Caco-2 (cell line): ENCODE measurements at regions of chr20 and their contacts with region 1.

Region 1: DNA sequence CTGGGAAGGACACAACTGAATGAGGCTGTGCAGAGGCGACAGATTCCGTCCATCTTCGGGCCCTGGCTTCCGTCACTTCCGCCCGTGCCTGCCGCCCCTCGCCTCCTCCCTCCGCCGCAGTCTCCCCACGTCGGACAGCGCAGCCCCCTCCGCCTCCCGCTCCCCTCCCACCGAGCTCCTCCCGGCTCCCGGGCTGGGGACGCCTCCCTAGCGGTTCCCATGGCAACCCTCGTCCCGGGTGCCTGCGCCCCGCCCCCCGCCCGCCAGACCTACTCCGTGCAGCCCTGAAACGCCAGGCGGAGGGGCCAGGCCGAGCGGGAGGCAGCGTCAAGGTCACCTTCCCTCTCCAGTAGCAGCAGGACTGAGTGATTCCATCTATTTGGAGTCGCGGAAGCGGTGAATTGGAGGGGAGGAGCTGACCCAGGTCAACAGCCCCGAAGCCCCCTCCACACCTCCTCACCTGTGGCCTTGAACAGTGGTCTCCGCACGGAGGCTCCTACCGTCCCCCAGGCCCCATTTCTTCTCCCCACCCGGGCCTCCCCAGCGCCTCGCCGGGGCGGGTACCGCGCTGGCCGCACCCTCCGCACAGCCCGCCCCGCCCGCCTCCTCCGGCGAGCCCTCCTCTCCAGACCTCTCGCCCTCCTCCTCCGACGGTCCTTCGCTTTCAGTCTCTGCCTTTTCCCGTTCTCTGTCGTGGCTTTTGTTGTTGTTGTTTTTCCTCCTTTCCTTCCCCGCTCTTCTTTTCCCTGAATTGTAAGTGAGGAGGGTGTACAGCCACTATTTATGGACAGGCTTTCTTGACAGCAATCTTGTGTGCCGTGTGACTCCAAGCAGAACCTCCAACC is 951 bp downstream of the NRSN2 start:
- DNase-seq: peak; percentile 98 to 99
- H3K4me3 ChIP-seq: peak overlapping the region; percentile 96
- H3K4me3 Mint-ChIP-seq: peak overlapping the region; percentile 98
- H3K27ac Mint-ChIP-seq: peak overlapping the region; percentile 97
- H3K4me1 ChIP-seq: peaks cover 16% of the 10 kb centered on the region
- H3K4me1 Mint-ChIP-seq: peaks cover 19% of the 10 kb centered on the region
- H3K27me3 ChIP-seq: no peaks in the 10 kb centered on the region
- H3K27me3 Mint-ChIP-seq: no peaks in the 10 kb centered on the region
- CTCF ChIP-seq: no peak

Region 2: DNA sequence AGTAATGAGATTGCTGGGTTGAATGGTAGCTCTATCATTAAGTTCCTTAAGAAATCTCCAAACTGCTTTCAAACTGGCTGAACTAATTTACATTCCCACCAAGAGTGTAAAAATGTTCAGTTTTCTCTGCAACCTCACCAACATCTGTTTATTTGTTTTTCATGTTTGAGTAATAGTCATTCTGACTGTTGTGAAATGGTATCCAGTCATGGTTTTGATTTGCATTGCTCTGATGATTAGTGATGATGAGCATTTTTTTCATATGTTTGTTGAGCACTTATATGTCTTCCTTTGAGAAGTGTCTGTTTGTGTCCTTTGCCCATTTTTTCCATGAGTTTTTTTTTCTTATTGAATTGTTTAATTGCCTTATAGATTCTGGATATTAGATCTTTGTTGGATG is 235.5 kb before region 1 on chr20:
- CTCF ChIA-PET with region 1: no interaction called
- POLR2A ChIA-PET with region 1: no interaction called
- intact Hi-C with region 1: no loop called
- DNase-seq: no peak
- H3K4me3 ChIP-seq: no peak overlapping the region
- H3K4me3 Mint-ChIP-seq: no peak overlapping the region
- H3K27ac Mint-ChIP-seq: no peak overlapping the region
- H3K4me1 ChIP-seq: no peaks in the 10 kb centered on the region
- H3K4me1 Mint-ChIP-seq: no peaks in the 10 kb centered on the region
- H3K27me3 ChIP-seq: no peaks in the 10 kb centered on the region
- H3K27me3 Mint-ChIP-seq: peaks cover 4% of the 10 kb centered on the region
- CTCF ChIP-seq: no peak

Region 3: GRCh38 chr20:324177-325044 is 23.5 kb before region 1 on chr20:
- CTCF ChIA-PET with region 1: no interaction called
- POLR2A ChIA-PET with region 1: interaction called, 14 read pairs
- intact Hi-C with region 1: loop called (anchors 1 kb)
- DNase-seq: peak; percentile 90 to 95
- H3K4me3 ChIP-seq: peak overlapping the region; percentile 59
- H3K4me3 Mint-ChIP-seq: peak overlapping the region; percentile 94
- H3K27ac Mint-ChIP-seq: peak overlapping the region; percentile 87
- H3K4me1 ChIP-seq: 0 out of 2 replicates have a peak, but pooled peaks cover 10% of the 10 kb centered on the region
- H3K4me1 Mint-ChIP-seq: peaks cover 8% of the 10 kb centered on the region
- H3K27me3 ChIP-seq: no peaks in the 10 kb centered on the region
- H3K27me3 Mint-ChIP-seq: peaks cover 4% of the 10 kb centered on the region
- CTCF ChIP-seq: peak; percentile 43 to 47

Region 4: GRCh38 chr20:330233-331149 is 17.4 kb before region 1 on chr20:
- CTCF ChIA-PET with region 1: interaction called, 18 read pairs
- POLR2A ChIA-PET with region 1: interaction called, 14 read pairs
- intact Hi-C with region 1: loop called (anchors 1 kb)
- DNase-seq: peak; percentile 76 to 77
- H3K4me3 ChIP-seq: no peak overlapping the region
- H3K4me3 Mint-ChIP-seq: no peak overlapping the region
- H3K27ac Mint-ChIP-seq: no peak overlapping the region
- H3K4me1 ChIP-seq: 0 out of 2 replicates have a peak, but pooled peaks cover 5% of the 10 kb centered on the region
- H3K4me1 Mint-ChIP-seq: peaks cover 8% of the 10 kb centered on the region
- H3K27me3 ChIP-seq: no peaks in the 10 kb centered on the region
- H3K27me3 Mint-ChIP-seq: no peaks in the 10 kb centered on the region
- CTCF ChIP-seq: peak; percentile 89 to 93

Region 5: GRCh38 chr20:371755-372542 is 24.1 kb after region 1 on chr20:
- CTCF ChIA-PET with region 1: no interaction called
- POLR2A ChIA-PET with region 1: interaction called, 15 read pairs
- intact Hi-C with region 1: no loop called
- DNase-seq: peak; percentile 96 to 98
- H3K4me3 ChIP-seq: no peak overlapping the region
- H3K4me3 Mint-ChIP-seq: peak overlapping the region; percentile 66
- H3K27ac Mint-ChIP-seq: peak overlapping the region; percentile 99
- H3K4me1 ChIP-seq: peaks cover 68% of the 10 kb centered on the region
- H3K4me1 Mint-ChIP-seq: peaks cover 60% of the 10 kb centered on the region
- H3K27me3 ChIP-seq: no peaks in the 10 kb centered on the region
- H3K27me3 Mint-ChIP-seq: no peaks in the 10 kb centered on the region
- CTCF ChIP-seq: no peak

Region 6: DNA sequence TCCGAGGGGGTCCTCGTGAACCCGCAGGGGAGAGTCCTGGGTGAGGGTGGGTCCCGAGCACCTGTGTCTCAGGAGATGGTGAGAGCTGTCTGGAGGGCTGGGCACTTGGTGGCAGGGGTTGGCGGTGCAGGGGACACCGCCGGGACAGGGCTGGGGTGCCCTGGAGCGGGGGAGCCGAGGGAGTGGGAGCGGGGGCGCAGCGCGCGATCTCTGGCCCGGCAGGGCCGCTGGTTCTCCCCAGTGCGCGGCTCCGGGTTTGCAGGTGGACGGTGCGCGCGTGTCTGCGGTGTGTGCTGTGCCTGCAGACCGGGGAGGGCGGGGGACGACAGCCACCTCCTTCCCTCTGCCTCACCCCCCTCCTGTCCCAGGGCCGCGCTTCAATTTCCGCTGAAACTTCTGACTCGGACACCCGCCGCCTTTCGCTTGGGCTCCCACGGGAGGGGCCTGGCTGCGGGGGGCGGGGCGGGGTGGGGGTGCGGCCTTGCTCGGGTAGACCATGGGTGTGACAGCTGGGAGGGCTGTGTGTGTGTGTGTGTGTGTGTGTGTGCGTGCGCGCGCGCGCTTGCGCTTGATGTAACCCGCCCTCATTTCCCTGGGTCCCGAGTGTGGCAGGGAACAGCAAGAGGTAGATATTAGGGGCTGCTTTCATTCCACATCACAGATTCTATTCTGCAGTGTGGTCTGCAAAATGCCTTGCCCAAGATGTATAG is 33.9 kb after region 1 on chr20:
- CTCF ChIA-PET with region 1: interaction called, 4 read pairs
- POLR2A ChIA-PET with region 1: interaction called, 20 read pairs
- intact Hi-C with region 1: no loop called
- DNase-seq: peak; percentile 83 to 85
- H3K4me3 ChIP-seq: peak overlapping the region; percentile 97
- H3K4me3 Mint-ChIP-seq: peak overlapping the region; percentile 83
- H3K27ac Mint-ChIP-seq: peak overlapping the region; percentile 92
- H3K4me1 ChIP-seq: peaks cover 12% of the 10 kb centered on the region
- H3K4me1 Mint-ChIP-seq: peaks cover 19% of the 10 kb centered on the region
- H3K27me3 ChIP-seq: no peaks in the 10 kb centered on the region
- H3K27me3 Mint-ChIP-seq: no peaks in the 10 kb centered on the region
- CTCF ChIP-seq: no peak

Region 7: DNA sequence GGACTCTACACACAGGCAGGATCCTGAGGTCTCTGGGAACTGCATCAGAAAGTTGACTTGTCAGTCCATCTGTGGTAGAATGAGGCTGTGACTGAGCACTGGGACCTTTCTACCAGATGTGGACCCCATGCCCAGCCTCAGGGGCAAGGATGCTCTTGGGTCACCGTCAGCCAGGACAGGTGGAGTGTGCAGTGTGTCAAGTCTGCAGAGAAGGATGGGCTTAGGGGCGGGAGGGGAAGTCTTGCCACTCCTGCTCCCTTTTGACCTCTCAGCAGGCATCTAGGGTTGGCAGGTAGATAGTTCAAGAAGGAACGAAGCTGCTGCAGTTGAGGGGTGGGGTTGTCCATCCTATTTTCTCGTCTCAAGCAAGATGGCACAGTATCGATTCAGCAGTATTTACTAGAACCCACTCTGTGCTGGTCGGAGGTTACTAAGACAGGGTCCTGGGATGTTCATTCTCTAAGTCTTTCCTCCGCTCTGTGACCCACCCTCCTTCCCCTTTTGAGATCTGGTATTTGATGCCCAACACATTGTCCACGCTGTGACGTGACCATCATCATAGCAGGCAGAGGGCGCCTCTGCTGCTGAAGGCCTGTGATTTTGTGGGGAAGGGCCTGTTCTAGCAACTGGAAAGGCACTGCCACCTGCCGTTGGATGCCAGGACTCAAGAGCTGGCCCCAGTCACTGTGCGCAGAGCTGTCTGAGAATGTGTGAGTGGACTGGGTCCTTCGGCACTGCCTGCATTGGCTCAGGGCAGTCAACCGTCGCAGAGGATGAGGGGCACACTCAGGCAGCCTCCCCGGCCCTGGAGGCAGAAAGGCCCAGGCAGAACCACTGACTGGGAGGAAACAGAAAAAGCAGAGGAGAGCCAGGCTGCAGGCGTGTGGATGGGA is 83.4 kb after region 1 on chr20:
- CTCF ChIA-PET with region 1: interaction called, 47 read pairs
- POLR2A ChIA-PET with region 1: interaction called, 4 read pairs
- intact Hi-C with region 1: no loop called
- DNase-seq: peak; percentile 83 to 84
- H3K4me3 ChIP-seq: no peak overlapping the region
- H3K4me3 Mint-ChIP-seq: no peak overlapping the region
- H3K27ac Mint-ChIP-seq: peak overlapping the region; percentile 42
- H3K4me1 ChIP-seq: no peaks in the 10 kb centered on the region
- H3K4me1 Mint-ChIP-seq: no peaks in the 10 kb centered on the region
- H3K27me3 ChIP-seq: no peaks in the 10 kb centered on the region
- H3K27me3 Mint-ChIP-seq: no peaks in the 10 kb centered on the region
- CTCF ChIP-seq: peak; percentile 88 to 90

Region 8: DNA sequence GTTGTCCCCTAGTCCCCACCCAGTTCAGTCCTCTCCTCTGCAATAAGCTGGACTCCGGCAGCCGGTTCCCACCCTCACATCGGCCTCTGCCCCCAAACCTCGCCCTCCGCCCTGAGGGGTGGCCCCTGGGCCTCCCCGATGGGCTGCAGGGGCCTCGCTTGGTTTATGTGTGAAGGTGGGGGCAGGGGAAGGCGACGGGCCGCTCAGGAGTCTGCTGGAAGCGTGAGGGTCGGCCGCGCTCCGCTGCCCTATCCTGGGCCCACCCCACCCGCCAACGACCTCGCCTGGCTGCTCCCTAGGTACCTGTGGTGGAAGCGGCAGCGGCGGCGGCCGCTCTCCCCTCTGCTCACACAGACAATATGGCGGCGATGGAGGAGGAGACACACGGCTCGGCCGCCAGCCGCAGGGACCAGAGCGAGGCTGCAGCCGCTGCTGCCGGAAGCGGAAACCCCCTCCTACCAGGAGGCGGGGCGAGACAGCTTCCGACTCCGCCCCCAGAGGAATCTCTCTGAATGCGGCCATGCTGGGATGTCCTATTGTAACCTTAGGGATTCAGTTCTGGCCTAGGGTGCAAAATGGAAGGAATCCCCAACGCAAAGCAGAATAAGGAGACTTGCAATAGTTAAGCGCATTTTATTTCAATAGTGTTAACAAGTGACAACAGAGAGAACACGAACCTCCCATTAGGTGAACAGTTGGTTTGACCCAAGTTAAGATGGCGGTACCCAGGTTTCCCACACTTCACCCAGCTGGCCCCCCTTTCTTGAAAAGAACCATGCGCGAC is 195.7 kb after region 1 on chr20 and contains the start of gene CSNK2A1:
- CTCF ChIA-PET with region 1: no interaction called
- POLR2A ChIA-PET with region 1: interaction called, 6 read pairs
- intact Hi-C with region 1: loop called (anchors 1 kb)
- DNase-seq: peak; percentile 96 to 97
- H3K4me3 ChIP-seq: peak within 1 kb of the TSS; percentile 96
- H3K4me3 Mint-ChIP-seq: peak within 1 kb of the TSS; percentile 78
- H3K27ac Mint-ChIP-seq: peak within 1 kb of the TSS; percentile 16
- H3K4me1 ChIP-seq: peaks cover 7% of the 10 kb centered on the region
- H3K4me1 Mint-ChIP-seq: peaks cover 23% of the 10 kb centered on the region
- H3K27me3 ChIP-seq: no peaks in the 10 kb centered on the region
- H3K27me3 Mint-ChIP-seq: peaks cover 7% of the 10 kb centered on the region
- CTCF ChIP-seq: no peak
- total RNA-seq, gene CSNK2A1: 188 and 205 TPM in 2 replicates